Head of caudate nucleus (tissue), 42 donors: ENCODE measurements at regions of chr3 and their contacts with region 1.

Region 1: DNA sequence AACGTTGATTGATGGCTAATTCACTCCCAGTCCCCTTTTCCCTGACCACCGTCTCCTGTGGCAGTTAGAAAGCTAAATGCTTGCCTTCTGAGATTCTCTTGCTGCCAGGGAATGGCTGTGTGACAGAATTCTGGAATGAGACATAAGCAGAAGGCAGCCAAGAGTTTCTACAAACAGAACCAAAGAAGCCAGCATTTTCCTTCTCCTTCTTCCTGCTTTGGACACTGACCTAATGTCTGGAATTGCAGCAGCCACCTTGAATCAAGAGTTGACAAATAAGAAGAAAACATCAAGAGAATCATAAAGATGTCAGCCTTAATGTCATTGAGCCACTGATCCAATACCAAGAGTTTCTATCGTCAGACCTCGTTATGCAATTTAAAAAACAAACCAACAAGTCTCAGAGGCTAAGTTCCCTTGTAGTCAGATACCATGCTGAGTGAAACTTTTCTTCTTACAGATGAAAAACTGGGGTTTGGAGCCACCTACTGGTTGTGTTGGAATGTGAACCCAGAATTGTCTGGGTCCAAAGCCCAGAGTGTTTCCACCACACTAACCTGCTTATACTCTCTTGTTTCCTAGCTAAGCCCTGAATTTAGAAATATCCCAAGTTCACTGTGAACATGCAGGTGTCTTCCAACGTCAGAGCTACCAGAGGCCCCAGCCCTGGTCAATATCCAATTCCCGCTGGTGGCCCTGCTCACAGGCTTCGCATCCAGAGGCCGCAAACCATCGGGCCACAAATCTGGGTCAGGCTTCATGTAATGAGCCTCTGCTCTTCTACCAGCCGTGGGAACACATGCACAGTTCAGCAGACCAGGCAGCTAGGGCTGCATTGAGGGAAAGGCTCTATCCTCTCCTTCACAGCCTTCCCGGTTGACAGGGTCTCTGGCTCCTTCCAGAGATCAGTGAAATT is 42.5 kb downstream of the MCF2L2 start:
- DNase-seq: peak in 31 of 42 donors; percentile 22 to 85 (median 56)

Region 2: GRCh38 chr3:183120538-183121215 is 265.3 kb before region 1 on chr3:
- intact Hi-C with region 1: loop called (anchors 2 kb)
- DNase-seq: no peak

Region 3: DNA sequence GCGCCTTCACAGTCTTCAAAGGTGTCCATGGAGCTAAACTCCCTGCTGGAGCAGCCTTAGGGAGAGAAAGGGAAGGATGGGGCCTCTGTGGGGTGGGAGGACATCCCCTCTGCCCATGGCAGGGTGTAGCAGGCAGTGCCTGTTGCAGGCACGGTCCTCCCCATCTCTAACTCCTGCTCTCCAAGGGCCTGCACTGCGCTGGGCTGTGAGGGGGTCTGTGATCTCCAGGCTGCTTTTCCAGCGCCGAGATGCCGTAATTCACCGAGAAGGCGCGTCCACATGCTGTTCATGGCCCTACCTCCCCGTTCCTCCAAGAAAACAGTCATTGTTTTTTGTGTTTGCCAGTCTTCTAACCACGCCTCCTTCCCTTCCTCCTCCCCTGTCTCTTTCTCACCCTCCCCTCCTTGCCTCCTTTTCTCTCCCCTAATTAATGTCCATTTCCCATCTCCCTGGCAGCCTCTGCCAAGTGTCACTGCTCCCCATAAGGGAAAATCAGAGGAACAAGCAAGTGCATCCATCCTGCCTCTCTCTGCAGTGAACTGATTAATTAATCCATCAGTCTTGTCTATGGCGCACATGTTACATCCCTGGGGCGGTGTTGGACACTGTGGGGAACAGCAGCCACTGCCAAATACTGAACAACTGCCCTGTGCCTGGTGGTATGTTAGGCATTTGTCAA is 205.7 kb before region 1 on chr3:
- intact Hi-C with region 1: loop called (anchors 5 kb)
- DNase-seq: peak in 13 of 42 donors; percentile 7 to 51 (median 30)